Activated T-helper 1 cell treated with anti-CD3 and anti-CD28 coated beads, Interleukin-12 subunit alpha, Interleukin-12 subunit beta, Interleukin-2, Interleukin-4 antibody, amounts not matched to agents 30 ng/mL and 10 ng/mL and 1 ng/mL, durations not matched to agents 14 hours and 24 hours and 36 hours (primary cell): ENCODE measurements at regions of chr4 and their contacts with region 1.

Region 1: DNA sequence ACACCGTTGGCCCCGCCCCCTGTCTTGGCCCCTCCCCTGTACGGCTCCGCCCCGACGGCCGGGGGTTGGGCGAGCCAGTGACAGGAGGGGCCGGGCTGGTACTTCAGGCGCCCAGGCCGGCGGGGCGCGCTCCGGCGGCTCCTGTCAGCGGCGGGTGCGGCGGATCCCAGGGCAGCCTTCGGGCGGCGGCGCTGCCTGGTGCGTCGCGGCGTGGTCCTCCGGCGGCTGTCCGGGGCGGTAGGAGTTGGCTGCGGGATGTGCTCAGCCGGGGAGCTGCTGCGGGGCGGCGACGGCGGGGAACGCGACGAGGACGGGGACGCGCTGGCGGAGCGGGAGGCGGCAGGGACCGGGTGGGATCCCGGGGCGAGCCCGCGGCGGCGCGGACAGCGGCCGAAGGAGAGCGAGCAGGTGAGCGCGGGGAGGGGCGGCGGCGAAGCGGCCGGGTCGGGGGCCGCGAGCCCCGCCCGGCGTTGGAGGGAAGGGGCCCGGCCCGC is at the start of gene FAM241A:
- DNase-seq: peak; percentile 80
- H3K4me3 Mint-ChIP-seq: peak within 1 kb of the TSS; percentile 98
- H3K27ac Mint-ChIP-seq: peak within 1 kb of the TSS; percentile 97
- H3K4me1 Mint-ChIP-seq: peaks cover 47% of the 10 kb centered on the region
- H3K27me3 Mint-ChIP-seq: no peaks in the 10 kb centered on the region
- total RNA-seq, gene FAM241A: 6.7 and 7.1 TPM in 2 replicates

Region 2: GRCh38 chr4:112099701-112100297 is 45.6 kb before region 1 on chr4:
- intact Hi-C with region 1: loop called (anchors 1 kb)
- DNase-seq: no peak
- H3K4me3 Mint-ChIP-seq: no peak overlapping the region
- H3K27ac Mint-ChIP-seq: no peak overlapping the region
- H3K4me1 Mint-ChIP-seq: peaks cover 20% of the 10 kb centered on the region
- H3K27me3 Mint-ChIP-seq: peaks cover 22% of the 10 kb centered on the region

Region 3: GRCh38 chr4:112127803-112128202 is 17.6 kb before region 1 on chr4:
- intact Hi-C with region 1: loop called (anchors 1 kb)
- DNase-seq: no peak
- H3K4me3 Mint-ChIP-seq: no peak overlapping the region
- H3K27ac Mint-ChIP-seq: no peak overlapping the region
- H3K4me1 Mint-ChIP-seq: peaks cover 15% of the 10 kb centered on the region
- H3K27me3 Mint-ChIP-seq: peaks cover 14% of the 10 kb centered on the region

Region 4: DNA sequence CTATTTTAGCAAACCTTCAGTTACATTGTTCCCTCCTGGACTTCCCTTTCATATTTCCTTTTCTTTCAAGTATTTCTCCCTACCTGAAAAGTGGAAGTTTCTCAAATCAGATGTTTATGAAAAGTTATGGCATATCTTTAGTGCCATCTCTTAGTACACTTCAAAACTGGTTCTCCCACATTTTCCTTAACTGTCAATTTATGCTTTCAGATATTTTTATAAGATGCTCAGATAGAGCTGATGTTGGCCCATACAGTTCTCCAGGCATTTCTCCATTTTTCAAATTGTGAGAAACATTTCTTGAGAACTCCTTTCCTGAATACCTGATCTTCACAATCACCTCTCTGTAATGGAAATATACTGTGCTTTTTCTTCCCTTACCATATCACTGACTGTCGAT is 53.7 kb after region 1 on chr4:
- intact Hi-C with region 1: loop called (anchors 1 kb)
- DNase-seq: no peak
- H3K4me3 Mint-ChIP-seq: no peak overlapping the region
- H3K27ac Mint-ChIP-seq: peak overlapping the region; percentile 11
- H3K4me1 Mint-ChIP-seq: peaks cover 19% of the 10 kb centered on the region
- H3K27me3 Mint-ChIP-seq: peaks cover 2% of the 10 kb centered on the region

Region 5: GRCh38 chr4:112515304-112516067 is 370.1 kb after region 1 on chr4:
- intact Hi-C with region 1: loop called (anchors 5 kb)
- DNase-seq: peak; percentile 49
- H3K4me3 Mint-ChIP-seq: peak overlapping the region; percentile 95
- H3K27ac Mint-ChIP-seq: peak overlapping the region; percentile 93
- H3K4me1 Mint-ChIP-seq: peaks cover 79% of the 10 kb centered on the region
- H3K27me3 Mint-ChIP-seq: peaks cover 82% of the 10 kb centered on the region